BJ (cell line): ENCODE measurements at regions of chr18 and their contacts with region 1.

Region 1: DNA sequence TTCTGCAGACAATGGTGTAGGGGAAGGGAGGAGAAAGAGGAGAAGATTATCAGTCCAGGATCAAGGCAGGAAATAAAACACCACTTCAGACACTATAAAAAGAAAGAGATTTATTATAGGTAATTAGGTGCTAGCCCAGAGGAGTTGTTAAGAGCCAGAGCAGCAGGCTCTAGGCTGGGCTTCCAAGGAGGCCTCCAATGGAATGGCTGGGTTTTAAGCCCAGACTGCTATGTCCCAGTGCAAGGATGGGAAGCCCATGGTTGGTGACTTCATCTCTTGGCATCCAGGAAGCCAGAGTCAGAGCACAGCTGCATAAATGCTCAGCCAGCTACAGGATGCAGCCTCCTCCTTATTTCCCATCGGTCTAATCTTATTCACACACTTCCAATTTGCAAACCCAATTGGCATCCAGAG is 95.6 kb downstream of the LAMA3 start:
- DNase-seq: peak; percentile 66
- H3K4me3 ChIP-seq: no peak overlapping the region
- H3K27me3 ChIP-seq: no peaks in the 10 kb centered on the region
- CTCF ChIP-seq: no peak

Region 2: GRCh38 chr18:23798249-23798648 is 13.4 kb after region 1 on chr18:
- CTCF ChIA-PET with region 1: interaction called, 10 read pairs
- POLR2A ChIA-PET with region 1: no interaction called
- DNase-seq: no peak
- H3K4me3 ChIP-seq: no peak overlapping the region
- H3K27me3 ChIP-seq: no peaks in the 10 kb centered on the region
- CTCF ChIP-seq: no peak